ENCODE measurements at regions of chr3 and their contacts with region 1.

Region 1: DNA sequence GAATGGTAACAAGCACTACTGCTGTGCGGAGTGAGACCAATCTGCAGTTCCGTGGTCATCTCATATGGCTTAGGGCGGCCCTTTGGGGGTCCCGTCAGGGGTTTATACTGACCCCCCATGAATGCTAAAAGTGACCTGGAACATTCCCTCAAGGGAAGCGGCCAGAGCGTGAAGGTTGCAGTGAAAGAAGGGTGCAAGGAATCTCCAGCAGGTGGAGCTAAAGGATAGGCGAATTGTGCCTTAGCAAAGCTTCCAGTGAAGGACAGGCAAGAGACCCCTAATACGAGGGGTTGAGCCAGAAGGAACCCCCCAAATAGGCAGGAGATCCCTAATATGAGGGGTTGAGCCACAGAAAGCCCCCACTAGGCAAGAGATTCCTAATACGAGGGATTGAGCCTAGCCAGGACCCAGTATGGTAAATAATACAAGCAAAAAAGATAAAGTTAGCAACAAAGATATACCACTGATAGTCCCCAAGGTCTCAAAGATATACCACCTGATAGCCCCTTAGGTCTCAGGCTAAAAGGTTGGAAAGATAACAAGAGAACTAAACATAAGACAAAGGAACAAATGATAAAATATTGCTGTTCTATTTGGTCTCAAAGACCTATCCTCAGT is 32.8 kb downstream of the ZNF589 start:
- DNase-seq: peak; percentile 74
- H3K4me3 ChIP-seq: no peak overlapping the region
- H3K27ac ChIP-seq: no peak overlapping the region
- H3K4me1 ChIP-seq: no peaks in the 10 kb centered on the region
- H3K27me3 ChIP-seq: no peaks in the 10 kb centered on the region
- CTCF ChIP-seq: peak; percentile 69

Region 2: GRCh38 chr3:48088749-48089466 is 184.8 kb before region 1 on chr3:
- intact Hi-C with region 1: no loop called
- DNase-seq: peak; percentile 98
- H3K4me3 ChIP-seq: peak overlapping the region; percentile 70
- H3K27ac ChIP-seq: peak overlapping the region; percentile 92
- H3K4me1 ChIP-seq: no peaks in the 10 kb centered on the region
- H3K27me3 ChIP-seq: no peaks in the 10 kb centered on the region
- CTCF ChIP-seq: no peak

Region 3: DNA sequence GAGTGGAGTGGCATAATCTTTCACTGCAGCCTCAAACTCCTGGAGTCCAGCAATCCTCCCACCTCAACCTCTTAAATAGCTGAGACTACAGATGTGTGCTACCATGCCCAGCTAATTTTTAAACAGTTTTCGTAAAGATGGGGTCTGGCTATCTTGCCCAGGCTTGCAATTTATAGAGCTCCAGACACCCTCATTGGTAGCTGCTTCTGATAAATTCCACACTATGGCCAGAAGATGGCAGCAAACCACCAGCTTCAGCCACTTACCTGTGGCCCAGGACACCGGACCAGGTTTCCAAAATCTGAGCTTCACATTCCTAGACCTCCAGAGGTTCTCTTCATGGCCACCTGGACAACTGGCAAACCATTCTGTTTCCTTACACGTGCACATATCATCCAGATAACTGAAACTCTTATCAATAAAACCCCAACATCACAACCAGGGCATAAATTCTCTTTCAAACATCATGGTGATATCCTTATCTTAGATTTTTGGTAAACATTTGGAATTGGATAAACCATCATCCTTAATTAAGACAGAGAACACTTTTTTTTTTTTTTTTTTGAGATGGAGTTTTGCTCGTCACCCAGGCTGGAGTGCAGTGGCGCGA is 127.2 kb after region 1 on chr3:
- intact Hi-C with region 1: loop called (anchors 10 kb)
- DNase-seq: peak; percentile 66
- H3K4me3 ChIP-seq: no peak overlapping the region
- H3K27ac ChIP-seq: no peak overlapping the region
- H3K4me1 ChIP-seq: no peaks in the 10 kb centered on the region
- H3K27me3 ChIP-seq: no peaks in the 10 kb centered on the region
- CTCF ChIP-seq: peak; percentile 81

Region 4: DNA sequence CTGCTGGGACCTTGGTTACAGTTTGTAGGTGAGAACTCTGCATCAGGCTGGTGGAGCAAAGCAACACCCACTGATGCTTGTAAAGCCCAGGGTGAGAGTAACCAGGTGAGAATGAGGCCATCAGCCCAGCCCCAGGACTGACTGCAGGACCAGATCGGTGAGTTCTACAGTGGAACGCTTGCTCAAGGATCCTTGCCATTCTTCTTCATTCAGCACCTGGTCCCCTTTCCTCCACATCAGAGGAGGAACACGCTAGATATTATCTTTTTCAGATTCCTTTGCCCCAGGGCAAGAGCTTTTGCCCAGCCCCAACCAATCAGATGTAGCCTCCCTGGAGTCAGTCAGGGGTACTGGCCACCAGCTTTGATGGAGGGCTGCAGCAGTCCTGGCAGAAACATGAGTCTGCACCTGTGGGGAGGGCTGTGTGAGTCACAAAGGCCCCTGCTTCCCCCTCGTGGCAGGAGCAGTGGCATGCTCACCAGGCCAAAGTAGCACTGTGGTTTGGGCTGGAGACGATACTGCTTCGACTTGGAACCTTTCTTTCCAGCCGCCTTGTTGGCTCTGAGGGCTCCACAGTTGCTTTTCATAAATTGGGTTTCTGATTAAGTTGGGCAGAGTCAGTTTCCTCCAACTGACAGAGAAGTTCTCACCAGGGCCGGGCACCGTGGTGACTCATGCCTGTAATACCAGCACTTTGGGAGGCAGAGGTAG is 233.8 kb after region 1 on chr3:
- intact Hi-C with region 1: no loop called
- DNase-seq: peak; percentile 44
- H3K4me3 ChIP-seq: no peak overlapping the region
- H3K27ac ChIP-seq: no peak overlapping the region
- H3K4me1 ChIP-seq: no peaks in the 10 kb centered on the region
- H3K27me3 ChIP-seq: no peaks in the 10 kb centered on the region
- CTCF ChIP-seq: peak; percentile 38